HEK293 (cell line): ENCODE measurements at regions of chr1 and their contacts with region 1.

Region 1: GRCh38 chr1:204257954-204258752 is 44.4 kb upstream of the GOLT1A start:
- H3K4me3 ChIP-seq: no peak overlapping the region
- H3K27ac ChIP-seq: no peak overlapping the region
- H3K4me1 ChIP-seq: peaks cover 8% of the 10 kb centered on the region; the same call in 1 of the 2 replicates
- CTCF ChIP-seq: peak; percentile 73

Region 2: DNA sequence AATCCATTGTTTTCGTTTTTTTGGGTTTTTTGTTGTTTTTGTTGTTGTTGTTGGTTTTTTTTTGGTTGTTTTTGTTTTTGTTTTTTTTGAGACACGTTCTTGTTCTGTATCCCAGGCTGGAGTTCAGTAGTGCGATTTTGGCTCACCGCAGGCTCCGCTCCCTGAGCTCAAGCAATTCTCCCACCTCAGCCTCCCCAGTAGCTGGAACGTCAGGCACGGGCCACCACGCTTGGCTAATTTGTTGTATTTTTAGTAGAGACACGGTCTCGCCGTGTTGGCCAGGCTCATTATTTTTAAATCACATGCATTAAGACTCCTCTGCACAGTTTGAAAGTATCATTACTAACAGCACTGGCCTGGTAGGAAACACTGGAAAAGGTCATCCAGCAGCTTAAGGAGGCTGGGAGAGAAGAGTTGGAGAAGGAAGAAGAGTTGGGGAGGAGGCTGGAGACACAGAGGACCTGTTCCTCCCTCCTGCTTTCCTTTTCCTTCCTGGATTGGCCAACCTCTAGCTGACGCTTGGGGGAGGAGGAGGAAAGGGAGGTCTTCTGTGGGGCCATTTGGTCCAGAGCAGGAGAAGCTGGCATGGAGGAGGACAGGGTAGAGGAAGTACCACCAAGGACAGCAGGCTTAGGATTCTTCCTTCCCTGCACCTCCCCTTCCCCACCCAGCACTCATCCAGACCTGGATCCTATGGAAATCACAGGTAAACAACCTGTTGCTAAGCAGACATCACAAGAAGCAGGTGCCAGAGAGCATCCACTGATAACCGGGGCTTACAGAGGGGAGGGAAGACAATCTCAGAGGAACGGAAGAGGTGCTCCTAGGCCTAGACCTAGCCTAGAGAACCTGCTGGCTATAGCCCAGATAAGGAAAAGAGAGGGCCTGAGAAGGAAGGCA is 27.5 kb after region 1 on chr1:
- CTCF ChIA-PET with region 1: interaction called, 13 read pairs
- POLR2A ChIA-PET with region 1: no interaction called
- H3K4me3 ChIP-seq: no peak overlapping the region
- H3K27ac ChIP-seq: no peak overlapping the region
- H3K4me1 ChIP-seq: peaks cover 12% of the 10 kb centered on the region
- CTCF ChIP-seq: no peak

Region 3: GRCh38 chr1:204323887-204324286 is 65.7 kb after region 1 on chr1:
- CTCF ChIA-PET with region 1: interaction called, 14 read pairs
- POLR2A ChIA-PET with region 1: no interaction called
- H3K4me3 ChIP-seq: no peak overlapping the region
- H3K27ac ChIP-seq: no peak overlapping the region
- H3K4me1 ChIP-seq: no peaks in the 10 kb centered on the region
- CTCF ChIP-seq: no peak

Region 4: DNA sequence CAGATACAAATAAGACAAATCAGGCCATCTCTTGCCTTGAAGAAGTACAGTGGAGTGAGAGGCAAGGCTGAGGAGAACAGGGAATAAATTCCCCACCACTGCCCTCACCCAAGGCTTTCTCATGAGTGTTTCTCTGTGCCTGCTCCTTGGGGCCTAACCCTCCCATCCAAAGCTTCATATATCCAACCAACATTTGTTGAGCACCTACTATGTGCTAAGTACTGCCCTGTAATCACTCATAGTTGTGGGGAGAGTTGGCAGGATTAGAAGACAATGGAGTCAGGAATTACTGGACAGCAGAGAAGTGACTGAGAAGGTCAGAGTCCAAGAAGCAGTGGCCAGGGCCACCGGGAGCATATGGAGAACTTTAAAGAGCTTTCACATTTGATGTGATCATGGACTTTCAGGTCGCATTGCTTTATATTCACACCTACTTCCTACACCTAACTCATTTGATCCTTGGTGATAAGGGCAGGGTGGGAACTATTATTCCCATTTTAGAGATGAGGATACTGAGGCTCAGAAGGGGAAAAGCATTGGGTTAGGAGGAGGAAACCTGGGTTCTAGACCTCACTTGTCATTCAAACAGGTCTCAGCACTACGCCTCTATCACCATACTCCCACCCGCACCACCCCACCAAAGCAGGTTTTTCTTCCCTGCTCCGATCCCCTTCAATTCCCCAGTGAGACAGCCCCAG is 95.2 kb after region 1 on chr1:
- CTCF ChIA-PET with region 1: interaction called, 10 read pairs
- POLR2A ChIA-PET with region 1: no interaction called
- H3K4me3 ChIP-seq: no peak overlapping the region
- H3K27ac ChIP-seq: no peak overlapping the region
- H3K4me1 ChIP-seq: no peaks in the 10 kb centered on the region; the same call in 1 of the 2 replicates
- CTCF ChIP-seq: no peak